ENCODE measurements at regions of chr1 and their contacts with region 1.

Region 1: GRCh38 chr1:156445789-156446263 is 54.7 kb downstream of the MEF2D start:
- DNase-seq: peak; percentile 83
- ATAC-seq: peak; percentile 97
- H3K4me3 ChIP-seq: no peak overlapping the region
- H3K4me3 Mint-ChIP-seq: no peak overlapping the region
- H3K27ac ChIP-seq: no peak overlapping the region
- H3K27ac Mint-ChIP-seq: no peak overlapping the region
- H3K4me1 ChIP-seq: peaks cover 4 to 10% of the 10 kb centered on the region in 2 donors
- H3K4me1 Mint-ChIP-seq: no peaks in the 10 kb centered on the region
- H3K27me3 ChIP-seq: peaks cover 0 to 64% (median 41%) of the 10 kb centered on the region in 4 experiments
- H3K27me3 Mint-ChIP-seq: peaks cover 61% of the 10 kb centered on the region
- CTCF ChIP-seq: peak; percentile 92

Region 2: GRCh38 chr1:156356875-156357534 is 88.8 kb before region 1 on chr1:
- CTCF ChIA-PET with region 1: interaction called, 19 read pairs
- POLR2A ChIA-PET with region 1: no interaction called
- intact Hi-C with region 1: loop called (anchors 1 kb)
- DNase-seq: peak; percentile 72
- ATAC-seq: peak; percentile 100
- H3K4me3 ChIP-seq: no peak overlapping the region
- H3K4me3 Mint-ChIP-seq: peak overlapping the region; percentile 33
- H3K27ac ChIP-seq: no peak overlapping the region
- H3K27ac Mint-ChIP-seq: no peak overlapping the region
- H3K4me1 ChIP-seq: peaks cover 6 to 9% of the 10 kb centered on the region in 2 donors
- H3K4me1 Mint-ChIP-seq: peaks cover 6% of the 10 kb centered on the region
- H3K27me3 ChIP-seq: peaks cover 0 to 25% (median 11%) of the 10 kb centered on the region in 4 experiments
- H3K27me3 Mint-ChIP-seq: peaks cover 35% of the 10 kb centered on the region
- CTCF ChIP-seq: peak; percentile 99

Region 3: GRCh38 chr1:156421062-156421938 is 24.5 kb before region 1 on chr1:
- CTCF ChIA-PET with region 1: interaction called, 18 read pairs
- POLR2A ChIA-PET with region 1: no interaction called
- intact Hi-C with region 1: no loop called
- DNase-seq: peak; percentile 79
- ATAC-seq: peak; percentile 73
- H3K4me3 ChIP-seq: peak overlapping the region in 4 of 5 experiments; percentile 41 to 65 (median 61)
- H3K4me3 Mint-ChIP-seq: peak overlapping the region; percentile 92
- H3K27ac ChIP-seq: no peak overlapping the region
- H3K27ac Mint-ChIP-seq: peak overlapping the region; percentile 21
- H3K4me1 ChIP-seq: peaks cover 27 to 29% of the 10 kb centered on the region in 2 donors
- H3K4me1 Mint-ChIP-seq: peaks cover 28% of the 10 kb centered on the region
- H3K27me3 ChIP-seq: peaks cover 0 to 82% (median 44%) of the 10 kb centered on the region in 4 experiments
- H3K27me3 Mint-ChIP-seq: peaks cover 84% of the 10 kb centered on the region
- CTCF ChIP-seq: no peak

Region 4: GRCh38 chr1:156435545-156436141 is 10.2 kb before region 1 on chr1:
- CTCF ChIA-PET with region 1: interaction called, 22 read pairs
- POLR2A ChIA-PET with region 1: no interaction called
- intact Hi-C with region 1: no loop called
- DNase-seq: peak; percentile 81
- ATAC-seq: peak; percentile 58
- H3K4me3 ChIP-seq: peak overlapping the region; percentile 16 to 69 (median 41)
- H3K4me3 Mint-ChIP-seq: peak overlapping the region; percentile 87
- H3K27ac ChIP-seq: no peak overlapping the region
- H3K27ac Mint-ChIP-seq: no peak overlapping the region
- H3K4me1 ChIP-seq: peaks cover 32 to 41% of the 10 kb centered on the region in 2 donors
- H3K4me1 Mint-ChIP-seq: peaks cover 20% of the 10 kb centered on the region
- H3K27me3 ChIP-seq: peaks cover 0 to 93% (median 82%) of the 10 kb centered on the region in 4 experiments
- H3K27me3 Mint-ChIP-seq: peaks cover 82% of the 10 kb centered on the region
- CTCF ChIP-seq: no peak

Region 5: DNA sequence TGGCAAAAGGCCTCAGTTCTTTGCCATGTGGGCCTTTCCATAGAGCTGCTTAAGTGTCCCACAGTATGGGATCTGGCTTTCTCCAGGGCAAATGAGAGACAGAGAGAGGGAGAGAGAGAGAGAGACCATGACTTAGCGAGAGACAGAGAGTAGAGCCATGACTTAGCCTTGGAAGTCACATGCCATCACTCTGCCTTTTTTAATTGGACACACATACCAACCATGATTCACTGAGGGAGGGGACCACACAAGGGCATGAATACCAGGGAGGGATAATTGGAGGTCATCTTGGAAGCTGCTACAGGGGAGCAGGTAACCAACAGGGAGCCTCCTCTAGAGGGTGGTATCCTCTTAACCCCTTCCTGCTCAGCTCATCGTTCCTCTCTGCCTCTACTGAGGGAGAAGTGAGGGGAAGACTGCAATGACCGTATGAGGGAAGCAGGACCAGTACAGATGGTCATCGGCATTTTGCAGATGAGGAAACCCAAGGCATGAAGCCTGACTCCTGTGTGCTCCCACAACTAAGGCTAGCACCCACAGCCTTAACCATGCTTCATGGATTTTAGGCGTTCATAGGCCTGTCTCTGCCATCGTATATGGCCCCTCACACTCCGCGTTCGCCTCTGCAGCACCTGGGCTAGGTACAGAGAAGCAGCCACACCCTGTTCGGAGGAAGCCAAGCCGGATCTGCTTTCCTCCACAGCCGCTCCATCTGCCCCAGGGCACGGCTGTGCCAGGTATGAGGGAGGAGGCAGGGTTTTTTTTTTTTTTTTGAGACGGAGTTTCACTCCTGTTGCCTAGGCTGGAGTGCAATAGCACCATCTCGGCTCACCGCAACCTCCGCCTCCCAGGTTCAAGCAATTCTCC is 16.2 kb after region 1 on chr1:
- CTCF ChIA-PET with region 1: interaction called, 11 read pairs
- POLR2A ChIA-PET with region 1: interaction called, 3 read pairs
- intact Hi-C with region 1: no loop called
- DNase-seq: no peak
- ATAC-seq: no peak
- H3K4me3 ChIP-seq: no peak overlapping the region
- H3K4me3 Mint-ChIP-seq: no peak overlapping the region
- H3K27ac ChIP-seq: peak overlapping the region in 1 of 2 donors; percentile 32
- H3K27ac Mint-ChIP-seq: peak overlapping the region; percentile 2
- H3K4me1 ChIP-seq: peaks cover 3 to 6% of the 10 kb centered on the region in 2 donors
- H3K4me1 Mint-ChIP-seq: peaks cover 14% of the 10 kb centered on the region
- H3K27me3 ChIP-seq: no peaks in the 10 kb centered on the region
- H3K27me3 Mint-ChIP-seq: no peaks in the 10 kb centered on the region
- CTCF ChIP-seq: no peak

Region 6: DNA sequence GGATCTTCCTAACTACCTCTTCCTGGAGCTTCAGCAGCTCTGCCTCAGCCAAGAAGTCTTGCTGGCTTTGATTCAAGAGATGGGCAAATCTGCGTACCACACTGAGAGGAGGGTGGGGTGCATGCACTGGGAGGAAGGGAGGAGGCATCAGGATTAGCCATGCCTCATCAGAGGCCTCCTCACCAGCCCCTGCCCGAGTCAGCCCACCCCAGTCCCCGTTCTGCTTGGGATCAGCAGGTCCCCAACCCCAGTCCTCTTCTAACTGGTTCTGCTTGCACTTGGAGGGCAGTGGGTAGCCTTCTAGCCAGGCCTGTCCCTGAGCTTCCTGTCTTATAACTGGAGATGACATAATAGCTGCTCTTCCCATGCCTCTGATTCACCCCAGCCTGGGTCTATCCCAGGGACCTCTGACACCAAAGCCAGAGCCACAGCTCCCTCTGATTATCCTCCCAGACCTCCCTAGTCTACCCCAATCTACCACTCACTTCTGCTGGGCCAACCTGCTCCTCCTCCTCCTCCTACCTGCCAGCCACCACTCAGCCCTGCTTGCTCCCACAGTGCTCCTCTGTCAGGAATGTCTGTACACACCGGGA is 95.1 kb after region 1 on chr1:
- CTCF ChIA-PET with region 1: no interaction called
- POLR2A ChIA-PET with region 1: no interaction called
- intact Hi-C with region 1: no loop called
- DNase-seq: no peak
- ATAC-seq: no peak
- H3K4me3 ChIP-seq: no peak overlapping the region
- H3K4me3 Mint-ChIP-seq: no peak overlapping the region
- H3K27ac ChIP-seq: no peak overlapping the region
- H3K27ac Mint-ChIP-seq: no peak overlapping the region
- H3K4me1 ChIP-seq: no peaks in the 10 kb centered on the region
- H3K4me1 Mint-ChIP-seq: no peaks in the 10 kb centered on the region
- H3K27me3 ChIP-seq: no peaks in the 10 kb centered on the region
- H3K27me3 Mint-ChIP-seq: no peaks in the 10 kb centered on the region
- CTCF ChIP-seq: no peak

Region 7: GRCh38 chr1:156560585-156561183 is 114.9 kb after region 1 on chr1:
- CTCF ChIA-PET with region 1: no interaction called
- POLR2A ChIA-PET with region 1: no interaction called
- intact Hi-C with region 1: no loop called
- DNase-seq: no peak
- ATAC-seq: no peak
- H3K4me3 ChIP-seq: no peak overlapping the region
- H3K4me3 Mint-ChIP-seq: no peak overlapping the region
- H3K27ac ChIP-seq: no peak overlapping the region
- H3K27ac Mint-ChIP-seq: no peak overlapping the region
- H3K4me1 ChIP-seq: no peaks in the 10 kb centered on the region
- H3K4me1 Mint-ChIP-seq: peaks cover under 1% of the 10 kb centered on the region
- H3K27me3 ChIP-seq: no peaks in the 10 kb centered on the region
- H3K27me3 Mint-ChIP-seq: no peaks in the 10 kb centered on the region
- CTCF ChIP-seq: no peak